ENCODE measurements at regions of chr16 and their contacts with region 1.

Region 1: DNA sequence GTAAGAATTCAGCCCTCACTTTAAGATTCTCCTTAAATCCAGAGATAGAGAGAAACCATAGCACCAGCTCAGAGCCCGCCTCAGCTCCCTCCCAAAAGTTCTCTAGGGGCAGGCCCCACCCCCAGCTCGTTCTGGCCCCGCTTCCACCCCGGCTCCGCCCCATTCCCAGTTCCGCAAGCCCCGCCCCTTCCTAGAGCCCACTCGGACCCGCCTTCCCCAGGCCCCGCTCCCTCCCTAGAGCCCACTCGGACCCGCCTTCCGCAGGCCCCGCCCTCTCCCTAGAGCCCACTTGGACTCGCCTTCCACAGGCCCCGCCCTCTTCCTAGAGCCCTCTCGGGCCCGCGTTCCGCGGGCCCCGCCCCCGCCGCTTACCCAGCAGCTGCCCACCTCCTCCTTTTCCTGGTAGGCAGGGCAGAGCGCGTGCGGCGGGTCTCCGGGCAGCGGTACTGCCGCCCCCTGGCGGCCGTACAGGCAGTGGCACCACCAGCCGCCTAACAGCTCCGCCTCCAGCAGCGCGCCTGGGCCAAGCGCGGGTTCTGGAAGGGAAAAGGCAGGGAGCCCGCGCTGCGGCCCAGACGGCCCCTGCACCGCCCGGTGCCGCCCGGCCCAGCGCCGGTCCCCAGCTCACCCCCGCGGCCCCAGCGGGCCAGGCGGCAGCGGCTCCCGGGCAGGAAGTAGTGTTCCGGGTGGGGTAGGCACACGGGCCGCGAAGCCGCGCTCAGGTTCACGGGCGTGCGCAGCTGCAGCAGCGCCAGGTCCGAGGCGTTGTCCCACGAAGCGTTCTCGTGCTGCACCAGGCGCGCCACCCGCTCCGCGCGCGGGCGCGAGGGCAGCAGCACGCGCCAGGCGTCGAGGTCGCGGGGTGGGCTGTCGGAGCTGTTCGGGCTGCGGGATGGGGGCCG is 6.8 kb upstream of the PRSS8 start:
- DNase-seq: peak; percentile 89 to 98 (median 95)
- H3K4me3 ChIP-seq: peak overlapping the region; percentile 25 to 78 (median 64)
- H3K27ac ChIP-seq: peak overlapping the region in 58 of 59 donors; percentile 30 to 93 (median 82)
- H3K27me3 ChIP-seq: peaks cover 0 to 7% (median 0%) of the 10 kb centered on the region in 45 donors
- CTCF ChIP-seq: peak; percentile 71 to 98 (median 89)

Region 2: GRCh38 chr16:31108035-31108793 is 34.1 kb before region 1 on chr16 and contains the start of gene BCKDK:
- intact Hi-C with region 1: loop called in 1 of 2 experiments (anchors 5 kb)
- DNase-seq: peak; percentile 57 to 90 (median 76)
- H3K4me3 ChIP-seq: peak within 1 kb of the TSS; percentile 66 to 99 (median 96)
- H3K27ac ChIP-seq: peak within 1 kb of the TSS; percentile 25 to 96 (median 88)
- H3K27me3 ChIP-seq: no peaks in the 10 kb centered on the region
- CTCF ChIP-seq: peak in 15 of 56 donors; percentile 9 to 46 (median 17)
- total RNA-seq, gene BCKDK: 27.7 to 57.4 (median 35.6) TPM

Region 3: DNA sequence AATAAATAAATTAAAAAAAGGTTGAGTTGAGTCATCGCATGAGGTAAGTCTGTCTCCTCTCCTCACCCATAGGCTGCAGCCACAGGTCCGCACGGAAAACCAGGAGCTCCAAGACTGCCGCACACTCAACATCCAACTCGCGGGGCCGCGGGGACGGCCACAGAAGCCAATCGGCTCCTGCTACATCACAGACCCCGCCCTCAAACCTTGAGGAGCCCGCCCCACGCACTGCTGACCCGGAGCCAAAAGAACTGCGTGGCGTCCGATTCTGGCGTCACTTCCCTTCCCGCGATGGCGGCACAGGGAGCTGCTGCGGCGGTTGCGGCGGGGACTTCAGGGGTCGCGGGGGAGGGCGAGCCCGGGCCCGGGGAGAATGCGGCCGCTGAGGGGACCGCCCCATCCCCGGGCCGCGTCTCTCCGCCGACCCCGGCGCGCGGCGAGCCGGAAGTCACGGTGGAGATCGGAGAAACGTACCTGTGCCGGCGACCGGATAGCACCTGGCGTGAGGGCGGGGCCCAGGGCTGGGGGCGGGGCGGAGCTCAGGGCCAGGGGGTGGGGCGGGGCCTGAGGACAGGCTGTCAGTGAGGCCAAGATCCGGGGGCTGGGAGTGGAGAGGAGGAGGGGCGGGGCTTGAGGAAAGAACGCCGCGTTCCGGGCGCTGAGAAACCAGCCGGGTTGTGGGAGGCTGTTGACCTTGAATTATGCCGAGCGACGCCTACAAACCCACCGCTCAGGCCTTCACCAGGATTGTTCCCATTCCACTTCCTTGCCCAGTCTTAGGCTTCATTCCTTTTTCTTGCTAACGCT is 24.8 kb before region 1 on chr16 and contains the start of gene KAT8:
- intact Hi-C with region 1: loop called in 1 of 2 experiments (anchors 1 kb)
- DNase-seq: peak; percentile 98 to 99 (median 99)
- H3K4me3 ChIP-seq: peak within 1 kb of the TSS; percentile 31 to 92 (median 78)
- H3K27ac ChIP-seq: peak within 1 kb of the TSS; percentile 59 to 97 (median 92)
- H3K27me3 ChIP-seq: no peaks in the 10 kb centered on the region
- CTCF ChIP-seq: peak in 6 of 56 donors; percentile 5 to 40 (median 16)
- total RNA-seq, gene KAT8: 58.1 to 99.4 (median 78.1) TPM

Region 4: GRCh38 chr16:31286421-31287032 is 144.2 kb after region 1 on chr16:
- intact Hi-C with region 1: no loop called
- DNase-seq: no peak
- H3K4me3 ChIP-seq: no peak overlapping the region
- H3K27ac ChIP-seq: no peak overlapping the region
- H3K27me3 ChIP-seq: peaks cover 0 to 10% (median 0%) of the 10 kb centered on the region in 45 donors
- CTCF ChIP-seq: no peak

Region 5: GRCh38 chr16:31440516-31441184 is 298.3 kb after region 1 on chr16:
- intact Hi-C with region 1: loop called in 1 of 2 experiments (anchors 5 kb)
- DNase-seq: peak in 2 of 10 donors; percentile 6 to 11
- H3K4me3 ChIP-seq: no peak overlapping the region
- H3K27ac ChIP-seq: peak overlapping the region in 40 of 59 donors; percentile 2 to 73 (median 46)
- H3K27me3 ChIP-seq: no peaks in the 10 kb centered on the region
- CTCF ChIP-seq: no peak

Measured in dorsolateral prefrontal cortex (tissue), 120 donors.